Esophagus muscularis mucosa (tissue), 4 donors: ENCODE measurements at regions of chr15 and their contacts with region 1.

Region 1: DNA sequence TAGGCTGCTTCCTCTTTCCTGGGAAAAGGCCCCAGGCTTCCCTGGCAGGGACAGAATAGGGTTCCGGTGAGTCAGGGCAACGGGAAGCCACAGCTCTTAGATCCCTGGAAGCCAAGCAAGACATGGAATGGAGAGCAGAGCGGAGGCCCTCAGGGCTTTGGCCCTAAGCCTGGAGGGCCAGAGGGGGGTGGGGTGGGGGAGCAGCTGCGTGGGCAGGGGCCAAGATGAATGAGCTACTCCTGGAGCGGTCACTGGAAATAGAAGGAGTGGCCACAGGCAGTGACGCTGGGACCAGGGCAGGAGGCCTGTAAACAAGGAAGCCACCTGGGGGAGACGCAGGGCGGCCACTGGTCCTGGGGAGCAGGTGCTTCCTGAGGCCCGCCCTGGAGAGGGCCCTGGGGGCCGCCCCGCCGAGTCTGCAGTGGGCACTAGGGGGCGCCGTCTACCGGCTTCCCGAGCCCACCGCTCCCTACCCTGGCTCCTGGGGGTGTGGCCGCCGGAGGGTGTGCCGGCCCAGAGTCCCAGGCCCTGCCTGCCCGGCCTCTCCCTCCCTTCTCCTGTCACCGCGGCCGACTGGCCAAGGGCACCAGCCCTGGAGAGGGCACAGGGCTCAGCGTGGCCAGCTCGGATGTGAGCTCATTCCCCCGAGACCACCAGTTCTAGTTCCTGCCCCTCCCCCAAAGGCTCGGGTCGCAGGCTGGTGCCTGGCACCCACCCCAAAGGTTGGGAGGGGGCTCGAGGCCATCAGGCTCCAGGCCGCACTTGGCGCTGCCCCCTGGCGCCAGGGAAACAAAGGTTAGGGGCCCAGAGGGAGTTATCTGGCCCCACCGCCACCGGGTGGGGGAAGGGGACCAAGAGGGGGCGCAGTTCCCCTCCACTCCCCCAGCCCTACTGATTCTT is 12.1 kb downstream of the VPS18 start:
- DNase-seq: no peak
- H3K4me3 ChIP-seq: peak overlapping the region; percentile 53 to 58 (median 56)
- H3K27ac ChIP-seq: peak overlapping the region; percentile 79 to 93 (median 85)
- H3K4me1 ChIP-seq: peaks cover 42 to 56% (median 52%) of the 10 kb centered on the region in 4 donors
- H3K27me3 ChIP-seq: no peaks in the 10 kb centered on the region
- CTCF ChIP-seq: peak; percentile 76 to 83 (median 81)
- EP300 ChIP-seq: no peak
- POLR2A ChIP-seq: no peak

Region 2: DNA sequence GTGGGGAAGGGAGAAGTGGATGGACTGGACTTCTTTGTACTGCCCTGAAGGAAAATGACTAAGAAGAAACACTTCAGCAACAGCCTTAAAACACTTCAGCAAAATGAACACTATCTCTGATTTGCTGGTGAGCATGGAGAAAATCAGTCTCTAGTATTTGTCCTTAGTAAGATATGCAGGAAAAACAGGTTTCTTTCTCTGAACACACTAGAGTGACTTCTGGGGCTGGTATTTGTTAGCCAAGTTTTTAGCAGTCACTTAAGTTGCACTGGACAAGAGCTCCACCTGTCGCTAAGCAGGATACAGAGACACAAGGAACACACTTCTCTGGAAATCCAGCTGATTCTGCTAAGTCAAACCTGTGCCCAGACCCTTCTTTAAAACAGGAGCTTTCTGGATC is 112.2 kb after region 1 on chr15:
- intact Hi-C with region 1: loop called (anchors 2 kb)
- DNase-seq: no peak
- H3K4me3 ChIP-seq: no peak overlapping the region
- H3K27ac ChIP-seq: no peak overlapping the region
- H3K4me1 ChIP-seq: peaks cover 15 to 44% (median 37%) of the 10 kb centered on the region in 4 donors
- H3K27me3 ChIP-seq: no peaks in the 10 kb centered on the region
- CTCF ChIP-seq: peak in 2 of 3 experiments; percentile 51
- EP300 ChIP-seq: no peak
- POLR2A ChIP-seq: no peak

Region 3: DNA sequence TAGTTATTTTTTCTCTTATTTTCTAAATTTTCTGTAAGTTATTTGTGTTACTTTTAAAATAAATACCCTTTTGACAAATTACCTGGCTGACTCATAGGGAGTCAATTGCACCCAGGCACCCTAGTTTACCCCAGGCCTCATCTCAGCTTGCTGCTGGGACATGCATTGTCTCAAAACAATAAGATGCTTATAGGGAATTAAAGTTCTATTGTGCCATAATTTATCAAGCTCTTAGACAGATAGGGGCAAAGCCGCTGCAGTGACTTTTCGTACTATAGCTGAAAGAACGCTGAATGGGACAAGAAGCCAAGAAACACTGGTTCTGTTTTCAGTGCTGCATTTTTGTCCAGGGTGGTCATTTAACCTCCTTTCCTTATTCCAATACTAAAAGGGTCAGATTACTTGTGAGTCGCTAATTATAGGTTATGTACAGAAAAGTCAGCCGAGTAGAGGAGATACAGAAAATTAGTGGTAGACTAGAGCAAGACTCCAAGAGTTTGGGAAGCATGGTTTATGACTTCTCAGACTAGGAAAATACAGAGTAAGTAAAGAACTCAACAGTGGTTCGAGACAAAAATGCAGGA is 274.0 kb after region 1 on chr15:
- intact Hi-C with region 1: loop called (anchors 2 kb)
- DNase-seq: no peak
- H3K4me3 ChIP-seq: no peak overlapping the region
- H3K27ac ChIP-seq: no peak overlapping the region
- H3K4me1 ChIP-seq: no peaks in the 10 kb centered on the region
- H3K27me3 ChIP-seq: peaks cover 0 to 8% (median 0%) of the 10 kb centered on the region in 4 donors
- CTCF ChIP-seq: no peak
- EP300 ChIP-seq: no peak
- POLR2A ChIP-seq: no peak